CD8-positive, alpha-beta T cell (primary cell): ENCODE measurements at regions of chr11 and their contacts with region 1.

Region 1: DNA sequence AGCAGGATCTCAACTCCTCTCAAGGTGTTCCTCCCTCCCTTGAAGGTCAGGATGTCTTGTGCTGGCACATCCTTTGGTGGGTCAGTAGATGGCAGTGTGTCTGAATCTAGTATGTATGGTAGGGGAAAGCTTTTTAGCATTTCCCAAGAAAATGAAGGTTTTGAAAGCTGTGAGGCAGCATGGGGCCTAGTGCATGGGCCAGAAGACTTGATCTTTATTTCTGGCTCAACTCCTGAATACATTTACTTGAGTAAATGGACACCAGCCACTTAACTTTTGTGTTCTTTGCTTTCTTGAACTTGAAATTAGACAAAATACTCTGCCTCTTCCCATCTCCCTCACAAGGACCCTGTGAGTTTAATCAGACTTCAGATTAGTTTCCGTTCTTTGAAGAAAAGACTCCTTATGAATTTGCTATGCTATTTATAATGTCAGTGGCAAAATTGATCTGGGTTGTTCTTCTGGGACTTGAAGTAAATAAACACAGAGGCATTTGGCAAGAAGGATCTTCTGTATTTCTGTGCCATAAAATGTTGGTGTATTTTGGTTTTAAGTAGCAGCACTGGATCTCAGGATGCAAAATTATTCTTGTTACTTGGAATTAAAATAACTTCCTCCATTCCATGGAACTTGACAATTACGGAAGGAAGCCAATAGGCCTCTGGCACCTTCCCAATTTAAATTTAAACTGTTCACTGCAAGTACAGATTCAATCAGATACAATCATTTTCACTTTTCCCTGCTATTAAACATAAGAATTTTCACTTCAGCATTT is 288.8 kb downstream of the CASP12 start:
- DNase-seq: peak in 8 of 9 experiments; percentile 16 to 73 (median 34)
- ATAC-seq: peak; percentile 92
- H3K4me3 ChIP-seq: no peak overlapping the region
- H3K4me3 Mint-ChIP-seq: no peak overlapping the region
- H3K27ac ChIP-seq: no peak overlapping the region
- H3K27ac Mint-ChIP-seq: no peak overlapping the region
- H3K4me1 ChIP-seq: peaks cover 5% of the 10 kb centered on the region
- H3K4me1 Mint-ChIP-seq: peaks cover 9% of the 10 kb centered on the region
- H3K27me3 ChIP-seq: no peaks in the 10 kb centered on the region
- H3K27me3 Mint-ChIP-seq: no peaks in the 10 kb centered on the region
- CTCF ChIP-seq: peak; percentile 85

Region 2: GRCh38 chr11:104095791-104096190 is 513.7 kb before region 1 on chr11:
- CTCF ChIA-PET with region 1: no interaction called
- POLR2A ChIA-PET with region 1: no interaction called
- intact Hi-C with region 1: no loop called
- DNase-seq: no peak
- ATAC-seq: no peak
- H3K4me3 ChIP-seq: no peak overlapping the region
- H3K4me3 Mint-ChIP-seq: no peak overlapping the region
- H3K27ac ChIP-seq: no peak overlapping the region
- H3K27ac Mint-ChIP-seq: no peak overlapping the region
- H3K4me1 ChIP-seq: no peaks in the 10 kb centered on the region
- H3K4me1 Mint-ChIP-seq: no peaks in the 10 kb centered on the region
- H3K27me3 ChIP-seq: no peaks in the 10 kb centered on the region
- H3K27me3 Mint-ChIP-seq: no peaks in the 10 kb centered on the region
- CTCF ChIP-seq: no peak

Region 3: DNA sequence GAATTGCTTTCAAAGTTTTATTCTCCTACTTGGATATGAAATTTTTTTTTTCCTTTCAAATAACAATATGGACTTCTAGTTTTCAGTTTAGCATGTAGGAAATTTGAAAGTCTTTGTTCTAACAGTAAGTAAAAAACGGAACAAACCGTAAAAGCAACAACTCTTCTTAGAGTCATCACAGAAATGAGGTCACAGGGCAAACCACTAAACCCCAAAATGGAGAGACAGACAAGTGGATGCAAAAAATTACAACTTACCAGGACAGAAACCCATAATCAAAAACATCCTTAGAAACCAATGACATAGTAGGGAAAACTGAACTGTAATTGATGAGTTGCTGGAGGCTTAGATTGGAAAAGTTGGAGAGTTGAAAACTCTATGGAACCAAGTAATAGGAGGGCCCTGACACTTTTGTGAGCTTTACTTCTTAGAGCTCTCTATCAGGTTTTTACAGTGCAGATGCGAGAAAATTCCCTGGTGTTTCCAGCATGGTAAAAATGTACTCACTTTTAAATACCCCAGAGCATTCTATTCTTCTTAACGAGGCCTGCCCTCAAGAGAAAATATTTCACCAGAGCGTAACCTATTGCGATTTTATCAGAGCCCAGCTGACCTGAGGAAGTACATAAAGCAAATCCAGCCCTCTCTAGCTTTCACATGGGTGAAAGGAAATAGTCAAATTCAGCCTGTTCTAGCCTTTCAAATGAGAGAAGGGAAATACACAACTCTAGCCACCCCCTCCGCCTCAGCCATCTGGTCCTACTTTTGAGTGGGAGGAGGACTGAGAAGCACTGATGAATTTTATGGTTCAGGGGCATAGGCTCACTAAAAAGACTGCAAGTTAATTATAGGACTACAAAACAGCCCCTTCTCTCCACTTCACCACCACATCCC is 249.6 kb after region 1 on chr11:
- CTCF ChIA-PET with region 1: no interaction called
- POLR2A ChIA-PET with region 1: no interaction called
- intact Hi-C with region 1: loop called in 1 of 2 experiments (anchors 5 kb)
- DNase-seq: peak in 2 of 9 experiments; percentile 29 to 35
- ATAC-seq: no peak
- H3K4me3 ChIP-seq: no peak overlapping the region
- H3K4me3 Mint-ChIP-seq: no peak overlapping the region
- H3K27ac ChIP-seq: peak overlapping the region in 1 of 2 experiments; percentile 21
- H3K27ac Mint-ChIP-seq: peak overlapping the region; percentile 73
- H3K4me1 ChIP-seq: peaks cover 6% of the 10 kb centered on the region
- H3K4me1 Mint-ChIP-seq: peaks cover 23% of the 10 kb centered on the region
- H3K27me3 ChIP-seq: no peaks in the 10 kb centered on the region
- H3K27me3 Mint-ChIP-seq: no peaks in the 10 kb centered on the region
- CTCF ChIP-seq: no peak

Region 4: DNA sequence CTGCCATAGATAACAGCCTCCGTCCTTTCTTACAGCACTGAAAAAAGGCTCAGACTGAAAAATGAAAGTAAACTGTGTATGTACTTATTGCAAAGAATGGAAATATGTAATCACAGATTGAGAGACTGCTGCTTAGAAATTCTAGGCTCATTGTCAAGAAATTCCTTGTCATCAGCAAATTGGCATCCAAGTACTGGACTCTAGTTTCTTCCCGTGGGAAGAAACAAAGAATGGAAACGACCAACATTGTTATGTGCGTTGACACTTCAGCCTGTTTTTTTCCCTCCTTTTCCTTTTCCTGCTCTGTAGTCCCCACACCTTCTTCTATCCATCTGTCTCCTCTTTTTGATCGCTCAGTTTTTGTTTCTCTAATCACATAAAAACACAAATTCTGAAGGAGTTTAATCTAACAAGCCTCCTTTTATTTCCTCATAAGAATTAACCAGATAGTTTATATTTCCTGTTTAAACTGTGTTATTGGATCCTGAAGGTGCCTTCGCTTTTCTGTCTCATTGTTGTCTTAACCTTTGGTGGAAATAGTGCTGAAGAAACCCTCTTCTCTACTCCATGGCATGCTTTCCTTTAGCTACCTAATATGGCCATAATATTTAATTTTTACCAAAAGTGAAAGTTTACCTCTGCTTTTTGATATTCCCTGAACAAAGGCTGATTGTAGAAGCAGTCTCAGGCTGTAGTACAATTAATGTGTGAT is 308.8 kb after region 1 on chr11:
- CTCF ChIA-PET with region 1: no interaction called
- POLR2A ChIA-PET with region 1: no interaction called
- intact Hi-C with region 1: loop called in 1 of 2 experiments (anchors 1 kb)
- DNase-seq: peak in 2 of 9 experiments; percentile 43 to 61
- ATAC-seq: peak; percentile 73
- H3K4me3 ChIP-seq: peak overlapping the region; percentile 53 to 64
- H3K4me3 Mint-ChIP-seq: peak overlapping the region; percentile 89
- H3K27ac ChIP-seq: peak overlapping the region; percentile 47 to 80
- H3K27ac Mint-ChIP-seq: peak overlapping the region; percentile 88
- H3K4me1 ChIP-seq: peaks cover 14% of the 10 kb centered on the region
- H3K4me1 Mint-ChIP-seq: peaks cover 54% of the 10 kb centered on the region
- H3K27me3 ChIP-seq: no peaks in the 10 kb centered on the region
- H3K27me3 Mint-ChIP-seq: no peaks in the 10 kb centered on the region
- CTCF ChIP-seq: no peak

Region 5: DNA sequence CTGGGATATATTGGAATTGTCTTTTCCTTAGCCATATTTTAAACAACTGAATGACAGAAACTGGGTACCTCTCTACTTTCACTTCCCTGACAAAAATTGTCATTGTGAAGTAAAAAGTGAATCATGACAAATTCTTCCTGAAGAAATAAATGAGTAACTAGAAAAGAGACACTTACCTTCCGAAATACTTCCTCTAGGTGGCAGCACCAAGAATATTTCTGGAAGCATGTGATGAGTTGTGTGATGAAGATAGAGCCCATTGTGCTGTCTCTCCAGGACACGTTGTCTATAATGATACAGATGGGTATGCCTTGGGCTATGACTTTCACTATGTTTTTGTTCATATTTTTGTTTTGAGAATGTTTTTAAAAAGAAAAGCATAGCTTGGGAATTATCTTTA is 337.4 kb after region 1 on chr11:
- CTCF ChIA-PET with region 1: interaction called, 7 read pairs
- POLR2A ChIA-PET with region 1: no interaction called
- intact Hi-C with region 1: loop called in 1 of 2 experiments (anchors 5 kb)
- DNase-seq: peak in 4 of 9 experiments; percentile 19 to 75 (median 44)
- ATAC-seq: peak; percentile 78
- H3K4me3 ChIP-seq: no peak overlapping the region
- H3K4me3 Mint-ChIP-seq: no peak overlapping the region
- H3K27ac ChIP-seq: no peak overlapping the region
- H3K27ac Mint-ChIP-seq: peak overlapping the region; percentile 5
- H3K4me1 ChIP-seq: no peaks in the 10 kb centered on the region
- H3K4me1 Mint-ChIP-seq: peaks cover 13% of the 10 kb centered on the region
- H3K27me3 ChIP-seq: no peaks in the 10 kb centered on the region
- H3K27me3 Mint-ChIP-seq: no peaks in the 10 kb centered on the region
- CTCF ChIP-seq: peak; percentile 71

Region 6: GRCh38 chr11:105000797-105001196 is 391.3 kb after region 1 on chr11:
- CTCF ChIA-PET with region 1: interaction called, 6 read pairs
- POLR2A ChIA-PET with region 1: no interaction called
- intact Hi-C with region 1: loop called (anchors 1 kb)
- DNase-seq: peak; percentile 5 to 75 (median 59)
- ATAC-seq: peak; percentile 89
- H3K4me3 ChIP-seq: no peak overlapping the region
- H3K4me3 Mint-ChIP-seq: no peak overlapping the region
- H3K27ac ChIP-seq: no peak overlapping the region
- H3K27ac Mint-ChIP-seq: peak overlapping the region; percentile 20
- H3K4me1 ChIP-seq: no peaks in the 10 kb centered on the region
- H3K4me1 Mint-ChIP-seq: peaks cover 5% of the 10 kb centered on the region
- H3K27me3 ChIP-seq: no peaks in the 10 kb centered on the region
- H3K27me3 Mint-ChIP-seq: no peaks in the 10 kb centered on the region
- CTCF ChIP-seq: peak; percentile 70

Region 7: DNA sequence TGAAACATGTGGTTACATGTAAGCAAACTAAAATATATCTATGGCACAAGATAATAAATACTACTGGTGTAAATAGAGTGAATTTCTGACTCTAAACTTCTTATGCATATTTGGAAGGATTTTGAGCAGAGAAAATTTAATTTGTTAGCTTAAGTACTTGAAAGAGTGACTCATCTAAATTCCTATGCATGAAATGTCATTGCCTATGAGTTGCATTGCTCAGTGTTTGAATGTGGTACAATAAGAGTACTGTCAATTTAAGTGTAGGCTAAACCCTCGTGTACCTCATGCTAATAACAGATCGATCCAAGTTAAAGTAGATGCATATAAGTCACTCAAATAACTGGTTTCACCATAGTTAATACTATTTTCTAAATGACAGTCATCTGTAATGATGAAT is 535.4 kb after region 1 on chr11:
- CTCF ChIA-PET with region 1: no interaction called
- POLR2A ChIA-PET with region 1: no interaction called
- intact Hi-C with region 1: no loop called
- DNase-seq: no peak
- ATAC-seq: no peak
- H3K4me3 ChIP-seq: no peak overlapping the region
- H3K4me3 Mint-ChIP-seq: no peak overlapping the region
- H3K27ac ChIP-seq: no peak overlapping the region
- H3K27ac Mint-ChIP-seq: no peak overlapping the region
- H3K4me1 ChIP-seq: no peaks in the 10 kb centered on the region
- H3K4me1 Mint-ChIP-seq: no peaks in the 10 kb centered on the region
- H3K27me3 ChIP-seq: no peaks in the 10 kb centered on the region
- H3K27me3 Mint-ChIP-seq: peaks cover 6% of the 10 kb centered on the region
- CTCF ChIP-seq: no peak

Region 8: DNA sequence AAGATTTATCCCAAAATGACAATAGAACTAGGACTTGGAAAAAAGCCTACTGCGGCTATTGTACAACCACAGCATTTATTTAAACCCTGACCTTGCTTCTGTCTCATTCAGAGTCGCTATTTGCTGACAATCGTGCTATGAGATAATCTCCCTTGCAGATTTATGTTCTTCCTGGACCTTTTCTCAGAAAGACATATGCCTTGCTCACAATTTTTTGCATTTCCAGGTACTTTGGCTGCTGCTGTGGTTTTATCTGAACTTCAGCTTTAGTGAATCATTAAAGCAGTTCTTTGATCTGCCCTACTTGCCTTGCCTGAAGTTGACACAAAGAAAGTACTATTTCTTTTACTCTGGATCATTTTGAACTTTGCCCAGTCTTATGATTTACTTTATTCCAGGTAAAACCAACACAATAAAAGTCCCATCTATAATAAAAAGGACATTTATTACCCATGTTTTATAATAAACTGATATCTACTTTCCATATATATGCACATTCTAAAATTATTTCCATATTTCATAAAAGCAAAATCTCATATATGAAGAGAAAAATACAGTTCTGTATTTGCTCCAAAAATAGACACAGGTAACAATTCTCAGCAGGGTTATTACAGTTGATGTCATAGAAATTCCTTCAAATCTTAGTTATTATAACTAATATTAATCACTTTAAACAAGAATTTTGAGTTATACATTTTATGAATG is 593.5 kb after region 1 on chr11:
- CTCF ChIA-PET with region 1: no interaction called
- POLR2A ChIA-PET with region 1: no interaction called
- intact Hi-C with region 1: loop called in 1 of 2 experiments (anchors 10 kb)
- DNase-seq: no peak
- ATAC-seq: no peak
- H3K4me3 ChIP-seq: no peak overlapping the region
- H3K4me3 Mint-ChIP-seq: no peak overlapping the region
- H3K27ac ChIP-seq: no peak overlapping the region
- H3K27ac Mint-ChIP-seq: no peak overlapping the region
- H3K4me1 ChIP-seq: peaks cover 7% of the 10 kb centered on the region
- H3K4me1 Mint-ChIP-seq: peaks cover 8% of the 10 kb centered on the region
- H3K27me3 ChIP-seq: no peaks in the 10 kb centered on the region
- H3K27me3 Mint-ChIP-seq: no peaks in the 10 kb centered on the region
- CTCF ChIP-seq: no peak

Region 9: GRCh38 chr11:105862736-105863367 is 1253.4 kb after region 1 on chr11:
- CTCF ChIA-PET with region 1: interaction called, 3 read pairs
- POLR2A ChIA-PET with region 1: no interaction called
- intact Hi-C with region 1: loop called (anchors 2 to 5 kb)
- DNase-seq: peak in 2 of 9 experiments; percentile 28 to 42
- ATAC-seq: no peak
- H3K4me3 ChIP-seq: no peak overlapping the region
- H3K4me3 Mint-ChIP-seq: no peak overlapping the region
- H3K27ac ChIP-seq: no peak overlapping the region
- H3K27ac Mint-ChIP-seq: no peak overlapping the region
- H3K4me1 ChIP-seq: no peaks in the 10 kb centered on the region
- H3K4me1 Mint-ChIP-seq: no peaks in the 10 kb centered on the region
- H3K27me3 ChIP-seq: no peaks in the 10 kb centered on the region
- H3K27me3 Mint-ChIP-seq: no peaks in the 10 kb centered on the region
- CTCF ChIP-seq: peak; percentile 64